Caco-2 (cell line): ENCODE measurements at regions of chr2 and their contacts with region 1.

Region 1: DNA sequence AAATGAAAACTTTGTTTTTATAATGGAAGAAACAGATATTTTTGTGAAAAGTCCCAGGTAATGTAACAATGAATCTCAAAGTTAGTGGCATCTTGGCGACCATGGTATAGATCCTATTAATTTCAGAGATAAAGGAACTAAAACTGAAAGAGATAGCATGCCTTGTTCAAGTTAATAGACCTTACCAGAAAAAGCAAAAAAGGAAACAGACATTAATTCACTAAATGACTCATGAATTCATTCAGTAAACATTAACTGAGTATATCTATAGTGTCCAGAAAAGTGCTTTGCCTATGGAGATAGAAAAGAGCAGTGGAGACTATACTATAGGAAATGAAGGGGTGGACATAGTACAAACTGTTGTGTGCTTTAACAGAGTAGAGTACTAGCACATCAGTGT is 763.3 kb downstream of the TRIB2 start:
- DNase-seq: no peak
- H3K4me3 ChIP-seq: no peak overlapping the region
- H3K4me3 Mint-ChIP-seq: no peak overlapping the region
- H3K27ac Mint-ChIP-seq: no peak overlapping the region
- H3K4me1 ChIP-seq: no peaks in the 10 kb centered on the region
- H3K4me1 Mint-ChIP-seq: no peaks in the 10 kb centered on the region
- H3K27me3 ChIP-seq: no peaks in the 10 kb centered on the region
- H3K27me3 Mint-ChIP-seq: no peaks in the 10 kb centered on the region
- CTCF ChIP-seq: no peak

Region 2: DNA sequence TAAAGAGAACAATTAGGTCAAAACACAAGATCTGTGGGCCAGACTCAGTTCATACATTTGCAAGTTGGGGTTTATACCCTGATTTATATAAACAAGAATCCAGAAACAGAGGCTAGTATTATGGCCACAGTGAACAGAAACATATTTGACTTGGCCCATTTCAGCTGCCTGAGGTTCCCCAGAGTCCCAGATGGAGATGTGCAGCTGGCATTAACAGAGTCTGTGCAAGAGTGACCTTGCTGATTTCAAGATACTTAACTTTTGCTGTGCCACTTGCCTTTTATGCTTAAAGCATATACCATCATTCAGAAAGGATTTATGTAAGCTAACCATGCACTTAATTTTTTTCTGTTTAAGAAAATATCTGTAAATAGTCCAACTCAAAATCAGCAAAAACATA is 127.0 kb before region 1 on chr2:
- CTCF ChIA-PET with region 1: no interaction called
- POLR2A ChIA-PET with region 1: no interaction called
- intact Hi-C with region 1: no loop called
- DNase-seq: no peak
- H3K4me3 ChIP-seq: no peak overlapping the region
- H3K4me3 Mint-ChIP-seq: no peak overlapping the region
- H3K27ac Mint-ChIP-seq: no peak overlapping the region
- H3K4me1 ChIP-seq: no peaks in the 10 kb centered on the region
- H3K4me1 Mint-ChIP-seq: no peaks in the 10 kb centered on the region
- H3K27me3 ChIP-seq: no peaks in the 10 kb centered on the region
- H3K27me3 Mint-ChIP-seq: no peaks in the 10 kb centered on the region
- CTCF ChIP-seq: no peak

Region 3: DNA sequence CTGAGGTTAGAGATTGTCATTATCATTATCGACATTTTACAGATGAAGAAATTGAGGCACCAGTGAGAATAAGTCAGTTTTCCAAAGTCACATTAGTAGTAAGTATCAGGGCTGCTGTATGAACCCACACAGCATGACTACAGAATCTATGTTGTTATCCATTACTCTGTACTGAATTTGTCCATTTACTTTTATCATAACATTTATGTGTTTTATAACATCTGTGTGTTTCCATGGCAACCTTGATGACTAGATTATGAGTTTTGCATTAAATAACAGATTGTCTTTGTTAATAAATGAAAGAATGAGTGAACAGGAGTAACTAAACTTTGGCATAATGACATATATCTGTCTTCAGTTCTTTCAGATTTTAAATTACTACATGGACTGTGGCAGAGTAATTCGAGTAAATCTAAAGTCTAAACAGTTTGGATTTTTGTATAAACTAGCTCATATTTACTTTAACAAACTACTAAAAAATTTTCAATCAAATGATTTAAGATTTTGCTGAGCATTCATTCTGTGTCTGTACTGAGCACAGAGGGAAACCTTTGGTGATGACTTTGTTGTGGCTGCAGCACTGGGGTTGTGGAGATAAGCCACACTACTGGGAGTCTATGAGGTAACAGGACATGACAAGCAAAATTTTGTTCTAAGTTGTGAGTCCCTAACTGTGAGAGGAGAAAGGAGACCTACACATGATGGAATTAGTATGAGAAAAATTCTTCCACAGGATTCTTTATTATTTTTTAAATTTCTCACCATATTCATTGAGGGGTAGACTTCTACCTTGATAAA is 218.6 kb after region 1 on chr2:
- CTCF ChIA-PET with region 1: no interaction called
- POLR2A ChIA-PET with region 1: no interaction called
- intact Hi-C with region 1: loop called (anchors 5 kb)
- DNase-seq: no peak
- H3K4me3 ChIP-seq: no peak overlapping the region
- H3K4me3 Mint-ChIP-seq: no peak overlapping the region
- H3K27ac Mint-ChIP-seq: no peak overlapping the region
- H3K4me1 ChIP-seq: no peaks in the 10 kb centered on the region
- H3K4me1 Mint-ChIP-seq: no peaks in the 10 kb centered on the region
- H3K27me3 ChIP-seq: no peaks in the 10 kb centered on the region
- H3K27me3 Mint-ChIP-seq: no peaks in the 10 kb centered on the region
- CTCF ChIP-seq: no peak

Region 4: GRCh38 chr2:14081521-14081920 is 601.5 kb after region 1 on chr2:
- CTCF ChIA-PET with region 1: no interaction called
- POLR2A ChIA-PET with region 1: no interaction called
- intact Hi-C with region 1: loop called (anchors 5 kb)
- DNase-seq: no peak
- H3K4me3 ChIP-seq: no peak overlapping the region
- H3K4me3 Mint-ChIP-seq: no peak overlapping the region
- H3K27ac Mint-ChIP-seq: no peak overlapping the region
- H3K4me1 ChIP-seq: no peaks in the 10 kb centered on the region
- H3K4me1 Mint-ChIP-seq: no peaks in the 10 kb centered on the region
- H3K27me3 ChIP-seq: no peaks in the 10 kb centered on the region
- H3K27me3 Mint-ChIP-seq: no peaks in the 10 kb centered on the region
- CTCF ChIP-seq: no peak

Region 5: GRCh38 chr2:14385043-14385442 is 905.0 kb after region 1 on chr2:
- CTCF ChIA-PET with region 1: no interaction called
- POLR2A ChIA-PET with region 1: no interaction called
- intact Hi-C with region 1: loop called (anchors 5 kb)
- DNase-seq: no peak
- H3K4me3 ChIP-seq: no peak overlapping the region
- H3K4me3 Mint-ChIP-seq: no peak overlapping the region
- H3K27ac Mint-ChIP-seq: no peak overlapping the region
- H3K4me1 ChIP-seq: no peaks in the 10 kb centered on the region
- H3K4me1 Mint-ChIP-seq: no peaks in the 10 kb centered on the region
- H3K27me3 ChIP-seq: no peaks in the 10 kb centered on the region
- H3K27me3 Mint-ChIP-seq: no peaks in the 10 kb centered on the region
- CTCF ChIP-seq: no peak